Endothelial cell of umbilical vein (primary cell): ENCODE measurements at regions of chr19 and their contacts with region 1.

Region 1: GRCh38 chr19:41753936-41754529 is 1.3 kb upstream of the CEACAM6 start:
- DNase-seq: peak; percentile 30
- H3K4me3 ChIP-seq: no peak overlapping the region
- H3K27ac ChIP-seq: no peak overlapping the region
- H3K4me1 ChIP-seq: no peaks in the 10 kb centered on the region
- H3K27me3 ChIP-seq: peaks cover 0 to 3% of the 10 kb centered on the region in 2 experiments
- CTCF ChIP-seq: peak; percentile 62 to 73
- POLR2A ChIP-seq: no peak

Region 2: GRCh38 chr19:41531438-41532311 is 222.4 kb before region 1 on chr19:
- CTCF ChIA-PET with region 1: no interaction called
- POLR2A ChIA-PET with region 1: no interaction called
- dilution Hi-C with region 1: no loop called
- intact Hi-C with region 1: no loop called
- DNase-seq: peak; percentile 98
- H3K4me3 ChIP-seq: no peak overlapping the region
- H3K27ac ChIP-seq: peak overlapping the region; percentile 85
- H3K4me1 ChIP-seq: peaks cover 31% of the 10 kb centered on the region
- H3K27me3 ChIP-seq: peaks cover 17 to 24% of the 10 kb centered on the region in 2 experiments
- CTCF ChIP-seq: no peak
- POLR2A ChIP-seq: peak; percentile 85

Region 3: DNA sequence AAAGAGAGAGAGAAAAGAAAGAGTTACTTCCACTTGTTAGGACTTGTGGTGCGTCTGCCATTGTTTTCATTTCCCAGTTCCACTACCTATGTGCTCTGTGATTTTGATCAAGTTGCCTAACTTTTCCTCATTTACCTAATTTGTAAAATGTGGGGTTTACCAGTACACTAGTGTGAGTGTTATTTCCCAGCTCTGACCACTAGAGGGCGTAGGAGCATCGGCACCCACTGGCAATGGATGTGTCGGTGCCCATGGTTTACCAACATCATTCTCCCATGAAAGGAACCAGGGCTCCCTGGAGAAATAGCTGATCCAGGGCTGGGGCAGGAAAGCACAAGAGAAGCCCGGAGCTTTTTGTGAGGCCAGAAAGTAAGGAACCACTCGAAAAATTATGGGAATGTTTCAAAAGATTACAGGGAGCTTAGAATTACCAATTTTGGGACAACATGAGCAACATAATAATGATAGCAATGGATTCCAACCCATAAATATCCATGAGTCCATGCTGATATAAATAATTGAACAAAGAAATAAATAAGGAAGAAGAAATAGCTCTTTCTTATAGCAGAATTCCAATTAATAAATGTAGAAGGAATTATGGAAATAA is 112.1 kb before region 1 on chr19:
- CTCF ChIA-PET with region 1: interaction called, 16 read pairs
- POLR2A ChIA-PET with region 1: no interaction called
- dilution Hi-C with region 1: no loop called
- intact Hi-C with region 1: no loop called
- DNase-seq: peak; percentile 54
- H3K4me3 ChIP-seq: no peak overlapping the region
- H3K27ac ChIP-seq: no peak overlapping the region
- H3K4me1 ChIP-seq: no peaks in the 10 kb centered on the region
- H3K27me3 ChIP-seq: peaks cover 1 to 2% of the 10 kb centered on the region in 2 experiments
- CTCF ChIP-seq: peak; percentile 82 to 83
- POLR2A ChIP-seq: no peak

Region 4: DNA sequence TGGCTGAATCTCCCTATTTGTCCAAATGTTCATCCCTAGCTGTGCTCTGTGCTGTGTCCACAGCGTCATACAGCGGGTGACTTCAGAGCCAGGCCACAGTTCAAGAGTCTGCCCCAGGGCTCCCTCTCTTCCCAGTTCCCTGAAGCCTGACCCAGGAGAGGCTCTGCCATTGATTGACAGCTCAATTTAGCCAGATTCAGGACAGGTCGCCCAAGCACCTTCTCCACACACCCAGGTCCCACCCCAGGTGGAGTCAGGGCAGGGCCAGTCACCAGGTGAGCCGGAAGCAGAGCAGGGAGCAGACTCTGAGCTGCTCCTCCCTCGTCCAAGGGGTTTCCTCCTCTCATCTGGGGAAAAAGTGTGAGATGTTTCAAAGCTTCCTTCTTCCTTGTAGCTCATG is 71.6 kb before region 1 on chr19:
- CTCF ChIA-PET with region 1: no interaction called
- POLR2A ChIA-PET with region 1: no interaction called
- dilution Hi-C with region 1: no loop called
- intact Hi-C with region 1: no loop called
- DNase-seq: no peak
- H3K4me3 ChIP-seq: no peak overlapping the region
- H3K27ac ChIP-seq: no peak overlapping the region
- H3K4me1 ChIP-seq: no peaks in the 10 kb centered on the region
- H3K27me3 ChIP-seq: peaks cover under 1 to 3% of the 10 kb centered on the region in 2 experiments
- CTCF ChIP-seq: no peak
- POLR2A ChIP-seq: no peak

Region 5: DNA sequence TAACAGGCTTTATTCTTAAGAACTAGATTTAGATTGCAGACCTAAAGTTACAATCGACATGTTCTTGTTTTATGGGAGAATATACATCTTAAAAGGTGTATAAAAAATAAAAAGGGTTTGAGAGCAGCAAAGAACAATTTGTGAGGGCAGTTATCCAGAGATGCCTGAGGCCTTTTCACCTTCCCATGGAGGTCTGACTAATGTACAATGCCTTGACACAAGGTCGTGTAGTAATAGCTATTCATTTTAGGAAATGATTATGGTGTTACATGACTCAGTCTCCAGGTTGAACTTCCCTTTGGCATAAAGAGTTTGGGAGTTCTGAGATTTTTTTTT is 21.3 kb after region 1 on chr19:
- CTCF ChIA-PET with region 1: interaction called, 16 read pairs
- POLR2A ChIA-PET with region 1: no interaction called
- dilution Hi-C with region 1: no loop called
- intact Hi-C with region 1: no loop called
- DNase-seq: no peak
- H3K4me3 ChIP-seq: no peak overlapping the region
- H3K27ac ChIP-seq: no peak overlapping the region
- H3K4me1 ChIP-seq: no peaks in the 10 kb centered on the region
- H3K27me3 ChIP-seq: peaks cover 2 to 4% of the 10 kb centered on the region in 2 experiments
- CTCF ChIP-seq: no peak
- POLR2A ChIP-seq: no peak

Region 6: DNA sequence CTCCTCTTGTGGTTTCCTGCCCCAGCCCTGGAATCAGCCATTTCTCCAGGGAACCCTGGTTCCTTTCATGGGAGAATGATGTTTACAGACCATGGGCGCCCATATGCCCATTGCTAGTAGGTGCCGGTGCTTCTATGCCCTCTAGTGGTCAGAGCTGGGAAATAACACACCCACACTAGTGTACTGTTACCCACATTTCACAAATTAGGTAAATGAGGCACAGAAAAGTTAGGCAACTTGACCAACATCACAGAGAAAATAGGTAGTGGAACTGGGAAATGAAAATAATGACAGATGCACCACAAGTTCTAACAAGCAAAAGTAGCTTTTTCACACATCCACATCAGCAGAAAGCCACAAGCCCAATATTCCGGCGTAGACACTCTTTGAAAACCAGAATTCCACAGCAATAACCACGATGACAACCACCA is 41.0 kb after region 1 on chr19:
- CTCF ChIA-PET with region 1: interaction called, 18 read pairs
- POLR2A ChIA-PET with region 1: no interaction called
- dilution Hi-C with region 1: no loop called
- intact Hi-C with region 1: no loop called
- DNase-seq: peak; percentile 36
- H3K4me3 ChIP-seq: no peak overlapping the region
- H3K27ac ChIP-seq: no peak overlapping the region
- H3K4me1 ChIP-seq: no peaks in the 10 kb centered on the region
- H3K27me3 ChIP-seq: peaks cover 0 to 4% of the 10 kb centered on the region in 2 experiments
- CTCF ChIP-seq: peak; percentile 69 to 75
- POLR2A ChIP-seq: no peak

Region 7: DNA sequence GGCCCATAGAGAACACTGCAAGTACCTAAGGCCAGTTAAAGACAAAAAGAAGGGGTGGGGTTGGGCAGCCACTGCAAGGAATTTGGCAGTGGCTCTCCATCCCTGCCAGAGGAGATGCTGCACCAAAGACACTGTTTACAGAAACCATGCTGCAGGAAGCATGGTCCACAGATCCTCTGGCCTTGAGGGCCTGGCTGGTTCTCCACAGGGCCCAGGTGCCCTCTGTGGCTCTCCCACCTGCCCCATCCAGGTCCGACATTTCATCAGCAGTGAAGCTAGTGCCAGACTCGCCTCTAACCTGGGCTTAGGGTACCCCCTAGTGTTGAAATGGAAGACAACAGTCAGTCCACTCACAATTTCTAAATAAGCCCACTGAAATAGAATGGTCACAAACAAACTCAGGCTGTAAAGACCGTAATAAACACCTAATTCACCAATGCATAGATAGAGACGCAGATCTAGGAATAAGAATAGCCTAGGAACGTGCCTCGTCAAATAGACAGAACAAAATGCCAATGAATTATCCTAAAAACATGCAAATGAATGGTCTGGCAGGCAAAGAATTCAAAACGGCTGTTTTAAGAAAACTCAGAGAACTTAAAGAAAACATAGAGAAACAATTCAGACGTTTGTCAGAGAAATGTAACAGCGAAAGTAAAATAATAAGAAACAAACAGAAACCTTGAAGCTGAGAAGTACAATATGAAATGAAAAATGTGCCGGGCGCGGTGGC is 67.1 kb after region 1 on chr19:
- CTCF ChIA-PET with region 1: interaction called, 22 read pairs
- POLR2A ChIA-PET with region 1: no interaction called
- dilution Hi-C with region 1: no loop called
- intact Hi-C with region 1: no loop called
- DNase-seq: peak; percentile 53
- H3K4me3 ChIP-seq: no peak overlapping the region
- H3K27ac ChIP-seq: no peak overlapping the region
- H3K4me1 ChIP-seq: no peaks in the 10 kb centered on the region
- H3K27me3 ChIP-seq: no peaks in the 10 kb centered on the region
- CTCF ChIP-seq: peak; percentile 37 to 64
- POLR2A ChIP-seq: no peak

Region 8: DNA sequence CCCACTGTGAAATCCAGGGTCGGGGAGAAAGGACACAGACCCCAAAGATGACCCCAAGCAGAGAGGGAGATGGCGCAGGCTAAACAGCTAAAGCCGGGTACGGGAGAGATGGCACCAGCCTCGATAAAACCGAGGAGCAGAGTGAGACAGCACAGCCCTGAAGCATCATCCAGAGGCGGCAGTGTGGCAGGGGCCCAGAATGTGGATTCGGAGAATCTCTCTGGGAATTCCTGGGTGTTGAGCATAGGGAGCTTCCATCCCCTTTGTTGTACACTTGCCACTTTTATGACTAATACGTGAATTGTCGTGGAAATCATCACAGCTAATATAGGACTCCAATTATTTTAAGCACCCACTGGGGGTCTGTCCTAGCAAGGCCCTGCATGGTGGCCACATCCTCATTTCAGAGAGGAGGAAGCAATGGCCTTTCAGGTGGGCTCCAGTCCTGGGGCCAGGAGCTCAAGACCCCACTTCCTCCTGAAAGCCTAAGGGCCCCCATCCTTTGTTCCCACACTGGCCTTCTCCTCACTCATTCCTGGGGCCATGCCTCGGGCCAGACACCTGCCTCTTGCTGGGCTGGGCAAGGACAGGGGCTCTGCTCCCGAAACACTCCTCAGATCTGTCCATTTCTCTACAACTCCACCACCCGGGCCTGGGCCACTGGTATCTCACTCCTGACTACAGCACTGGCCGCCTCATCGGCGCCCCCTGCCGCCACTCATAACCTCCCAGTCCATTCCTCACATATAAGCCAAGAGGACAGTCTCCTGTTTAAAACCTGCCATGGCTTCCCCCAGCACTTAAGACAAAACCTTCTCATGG is 269.3 kb after region 1 on chr19:
- CTCF ChIA-PET with region 1: no interaction called
- POLR2A ChIA-PET with region 1: no interaction called
- dilution Hi-C with region 1: no loop called
- intact Hi-C with region 1: no loop called
- DNase-seq: no peak
- H3K4me3 ChIP-seq: no peak overlapping the region
- H3K27ac ChIP-seq: no peak overlapping the region
- H3K4me1 ChIP-seq: no peaks in the 10 kb centered on the region
- H3K27me3 ChIP-seq: no peaks in the 10 kb centered on the region
- CTCF ChIP-seq: peak; percentile 31 to 34
- POLR2A ChIP-seq: no peak